ENCODE measurements at regions of chr15 and their contacts with region 1.

Region 1: DNA sequence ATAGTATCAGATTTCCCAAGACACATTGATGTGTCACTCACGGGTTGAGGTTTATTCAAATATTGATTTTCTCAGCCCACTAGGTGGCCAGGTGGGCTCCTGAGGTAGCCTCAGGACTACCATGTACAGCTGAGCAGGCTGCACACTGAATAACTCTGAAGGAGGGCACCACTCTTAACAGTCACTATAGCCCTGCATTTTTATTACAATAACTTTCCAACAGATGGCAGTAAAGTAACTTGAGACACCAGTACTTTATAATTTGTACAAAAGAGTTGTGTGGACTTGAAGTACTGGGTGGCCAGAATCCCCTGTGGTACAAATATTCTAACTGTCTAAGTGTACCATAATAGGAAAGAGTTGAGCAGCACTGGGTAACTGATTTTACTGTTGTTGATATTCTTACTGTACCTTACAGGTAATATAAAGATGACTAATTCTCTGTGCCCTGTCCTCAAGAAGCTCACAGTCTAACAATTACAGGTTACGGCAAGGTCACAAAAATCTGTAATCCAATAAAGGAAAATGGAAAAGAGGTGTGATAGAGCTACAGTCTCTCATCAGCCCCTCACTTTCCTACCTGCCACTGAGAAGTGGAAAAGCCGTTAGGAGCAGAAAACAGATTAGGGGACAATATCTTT is 76.0 kb downstream of the ETFA start:
- DNase-seq: no peak
- ATAC-seq: peak; percentile 71 to 83 (median 75)
- H3K4me3 ChIP-seq: no peak overlapping the region
- H3K27ac ChIP-seq: no peak overlapping the region
- H3K4me1 ChIP-seq: peaks cover 0 to 10% (median 0%) of the 10 kb centered on the region in 12 donors
- H3K27me3 ChIP-seq: no peaks in the 10 kb centered on the region
- CTCF ChIP-seq: peak; percentile 38 to 63 (median 51)
- POLR2A ChIP-seq: no peak

Region 2: GRCh38 chr15:76274821-76275220 is 39.5 kb after region 1 on chr15:
- intact Hi-C with region 1: loop called in 2 of 10 experiments (anchors 5 to 10 kb)
- DNase-seq: no peak
- ATAC-seq: no peak
- H3K4me3 ChIP-seq: no peak overlapping the region
- H3K27ac ChIP-seq: no peak overlapping the region
- H3K4me1 ChIP-seq: peaks cover 0 to 9% (median 0%) of the 10 kb centered on the region in 12 donors
- H3K27me3 ChIP-seq: no peaks in the 10 kb centered on the region
- CTCF ChIP-seq: no peak
- POLR2A ChIP-seq: no peak

Region 3: DNA sequence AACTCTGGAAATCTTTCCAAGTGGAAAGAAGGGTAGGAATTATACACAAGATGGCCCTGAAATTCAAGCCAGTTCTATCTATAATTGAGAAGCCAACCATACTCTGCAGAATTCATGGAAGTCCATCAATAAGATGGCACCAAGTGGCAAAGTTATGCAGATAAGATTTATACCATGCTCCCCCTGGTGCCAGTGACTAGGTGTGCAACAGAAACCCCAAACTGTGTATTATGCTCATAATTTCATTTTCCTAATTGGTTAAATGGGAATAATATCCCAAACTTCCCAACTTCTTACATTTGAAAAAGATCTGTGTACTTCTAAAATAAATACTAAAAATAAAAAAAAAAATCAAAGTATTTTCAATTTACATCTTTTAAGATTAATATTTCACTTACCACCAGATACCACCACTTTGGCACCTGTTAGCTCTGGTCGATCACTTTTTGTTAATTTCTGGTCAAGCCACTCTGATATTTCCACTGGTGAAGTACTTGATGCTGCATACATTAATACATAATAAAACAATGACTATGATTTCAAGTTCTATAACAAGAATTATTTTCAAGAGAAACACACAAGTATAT is 50.0 kb after region 1 on chr15:
- intact Hi-C with region 1: loop called in 1 of 10 experiments (anchors 10 kb)
- DNase-seq: no peak
- ATAC-seq: no peak
- H3K4me3 ChIP-seq: no peak overlapping the region
- H3K27ac ChIP-seq: no peak overlapping the region
- H3K4me1 ChIP-seq: peaks cover 0 to 16% (median 0%) of the 10 kb centered on the region in 12 donors
- H3K27me3 ChIP-seq: no peaks in the 10 kb centered on the region
- CTCF ChIP-seq: peak in 9 of 12 donors; percentile 12 to 40 (median 32)
- POLR2A ChIP-seq: no peak

Region 4: DNA sequence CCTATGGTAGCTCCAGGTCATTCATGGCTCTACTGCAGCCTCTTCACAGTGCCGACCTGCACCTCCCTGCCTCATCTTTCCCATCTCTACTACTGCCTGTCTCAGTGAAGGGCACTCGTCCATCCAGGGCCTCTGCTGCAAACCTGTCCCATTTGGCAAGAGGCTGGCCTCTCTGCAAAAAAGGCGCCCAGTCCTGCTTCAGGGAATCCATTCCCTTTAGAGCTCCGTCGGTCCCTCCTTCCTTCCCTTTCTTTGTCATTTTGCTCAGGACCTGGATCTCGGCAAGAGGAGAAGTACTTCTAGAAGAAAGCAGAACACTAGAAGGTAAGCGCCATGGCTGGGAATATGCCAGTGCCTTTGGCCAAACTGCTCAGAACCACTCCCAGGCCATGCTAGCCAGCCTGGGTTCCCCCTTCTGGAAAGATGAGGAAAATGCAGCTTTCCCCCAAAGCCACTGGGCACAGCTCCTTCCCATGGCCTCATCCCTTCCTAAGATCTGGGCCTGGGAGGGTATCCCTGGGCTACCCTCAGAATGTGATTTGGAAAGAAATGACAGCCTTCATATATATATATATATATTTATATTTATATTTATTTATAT is 94.9 kb after region 1 on chr15:
- intact Hi-C with region 1: loop called in 9 of 10 experiments (anchors 2 to 10 kb)
- DNase-seq: peak in 4 of 5 donors; percentile 40 to 63 (median 50)
- ATAC-seq: peak; percentile 62 to 83 (median 73)
- H3K4me3 ChIP-seq: no peak overlapping the region
- H3K27ac ChIP-seq: no peak overlapping the region
- H3K4me1 ChIP-seq: peaks cover 0 to 7% (median 4%) of the 10 kb centered on the region in 12 donors
- H3K27me3 ChIP-seq: peaks cover 7 to 42% (median 25%) of the 10 kb centered on the region in 9 donors
- CTCF ChIP-seq: peak; percentile 41 to 72 (median 58)
- POLR2A ChIP-seq: no peak

Region 5: GRCh38 chr15:76336254-76337058 is 101.2 kb after region 1 on chr15 and contains the start of gene ISL2:
- intact Hi-C with region 1: loop called in 7 of 10 experiments (anchors 2 to 10 kb)
- DNase-seq: peak in 3 of 5 donors; percentile 53 to 80 (median 54)
- ATAC-seq: peak in 1 of 4 donors; percentile 27
- H3K4me3 ChIP-seq: peak within 1 kb of the TSS in 9 of 12 donors; percentile 1 to 53 (median 21)
- H3K27ac ChIP-seq: peak within 1 kb of the TSS in 1 of 12 donors; percentile 30
- H3K4me1 ChIP-seq: peaks cover 3 to 67% (median 41%) of the 10 kb centered on the region in 12 donors
- H3K27me3 ChIP-seq: peaks cover 70 to 92% (median 85%) of the 10 kb centered on the region in 9 donors
- CTCF ChIP-seq: no peak
- POLR2A ChIP-seq: no peak
- total RNA-seq, gene ISL2: not detected

Region 6: DNA sequence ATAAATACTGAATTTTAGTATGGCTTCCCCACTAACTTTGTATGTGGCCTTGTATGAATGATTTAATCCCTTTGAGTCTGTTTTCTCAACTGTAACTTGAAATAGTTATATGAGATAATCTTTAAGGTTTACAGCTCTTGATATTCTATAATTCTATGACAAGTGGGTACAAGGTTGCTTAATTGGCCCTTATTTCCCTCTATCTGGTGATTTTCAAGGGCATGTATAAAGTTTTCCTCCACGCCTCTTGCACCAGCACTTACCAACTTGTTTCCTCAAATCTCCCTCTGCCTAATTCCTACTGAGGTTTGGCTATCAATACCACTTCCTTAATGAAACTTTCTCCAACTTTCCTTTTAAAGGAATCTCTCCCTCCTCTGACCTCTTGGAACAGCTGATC is 214.1 kb after region 1 on chr15:
- intact Hi-C with region 1: no loop called
- DNase-seq: no peak
- ATAC-seq: no peak
- H3K4me3 ChIP-seq: no peak overlapping the region
- H3K27ac ChIP-seq: no peak overlapping the region
- H3K4me1 ChIP-seq: peaks cover 0 to 4% (median 0%) of the 10 kb centered on the region in 12 donors
- H3K27me3 ChIP-seq: no peaks in the 10 kb centered on the region
- CTCF ChIP-seq: no peak
- POLR2A ChIP-seq: no peak

Measured in heart left ventricle (tissue), 16 donors.